Dorsolateral prefrontal cortex (tissue), 120 donors: ENCODE measurements at regions of chr16 and their contacts with region 1.

Region 1: GRCh38 chr16:55871411-55872038 is 3.6 kb downstream of the CES5A start:
- DNase-seq: no peak
- H3K4me3 ChIP-seq: no peak overlapping the region
- H3K27ac ChIP-seq: no peak overlapping the region
- H3K27me3 ChIP-seq: no peaks in the 10 kb centered on the region
- CTCF ChIP-seq: no peak

Region 2: DNA sequence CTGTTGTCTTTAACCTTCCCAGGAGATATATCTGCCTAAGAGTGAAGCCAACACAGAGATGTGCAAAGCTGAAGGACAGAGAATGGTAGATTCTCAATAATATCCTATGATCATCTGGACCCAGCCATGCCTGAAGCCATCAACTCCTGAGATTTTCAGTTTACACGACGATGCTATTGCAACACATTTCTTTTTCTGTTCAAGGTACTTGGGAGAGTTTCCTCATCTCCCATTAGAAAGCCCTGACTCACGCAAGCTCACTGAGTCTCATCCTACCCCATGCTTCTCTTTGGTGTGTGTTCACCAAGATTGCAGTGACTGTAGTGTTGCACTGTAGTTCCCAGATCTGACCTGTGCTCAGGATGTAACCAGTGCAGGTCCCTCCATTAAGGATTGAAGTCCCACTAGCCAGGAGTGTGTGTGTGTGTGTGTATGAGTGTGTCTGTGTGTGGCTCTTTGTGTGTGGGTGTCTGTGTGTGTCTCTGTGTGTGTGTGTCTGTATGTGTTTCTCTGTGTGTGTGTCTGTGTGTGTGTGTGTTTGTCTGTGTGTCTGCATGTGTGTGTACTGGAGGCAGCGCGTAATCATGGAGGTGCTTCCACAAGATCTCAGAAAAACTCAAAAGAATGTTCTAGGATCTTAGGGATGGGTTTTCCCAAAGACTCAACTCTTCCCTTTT is 54.2 kb before region 1 on chr16:
- intact Hi-C with region 1: no loop called
- DNase-seq: no peak
- H3K4me3 ChIP-seq: no peak overlapping the region
- H3K27ac ChIP-seq: no peak overlapping the region
- H3K27me3 ChIP-seq: peaks cover 0 to 67% (median 8%) of the 10 kb centered on the region in 45 donors
- CTCF ChIP-seq: no peak

Region 3: GRCh38 chr16:55832758-55833540 is 38.6 kb before region 1 on chr16 and contains the start of gene CES1:
- intact Hi-C with region 1: no loop called
- DNase-seq: no peak
- H3K4me3 ChIP-seq: peak within 1 kb of the TSS in 6 of 59 donors; percentile 9 to 33 (median 24)
- H3K27ac ChIP-seq: no peak within 1 kb of the TSS
- H3K27me3 ChIP-seq: peaks cover 0 to 4% (median 0%) of the 10 kb centered on the region in 45 donors
- CTCF ChIP-seq: no peak
- total RNA-seq, gene CES1: 0.22 to 14.7 (median 1.7) TPM in 111 of 120 experiments, not detected in the others

Region 4: DNA sequence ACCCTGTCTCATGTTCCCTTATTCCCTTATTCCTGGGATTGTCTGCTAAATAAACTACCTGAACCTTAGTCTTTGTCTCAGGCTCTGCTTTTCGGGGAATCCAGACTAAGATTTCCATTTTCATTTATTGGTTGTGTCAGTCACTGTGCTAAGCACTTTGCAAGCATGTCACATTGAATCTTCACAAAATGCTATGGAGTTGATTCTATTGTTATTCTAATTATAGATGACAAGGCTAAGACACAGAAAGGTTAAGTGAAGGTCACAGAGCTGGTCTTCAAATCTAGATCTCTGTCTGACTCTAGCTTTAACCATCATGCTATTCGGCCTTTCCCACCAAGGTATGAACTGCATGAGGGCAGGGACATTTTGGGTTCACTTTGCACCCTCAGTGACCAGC is 17.0 kb after region 1 on chr16:
- intact Hi-C with region 1: loop called in 1 of 2 experiments (anchors 1 kb)
- DNase-seq: no peak
- H3K4me3 ChIP-seq: no peak overlapping the region
- H3K27ac ChIP-seq: no peak overlapping the region
- H3K27me3 ChIP-seq: peaks cover 0 to 3% (median 0%) of the 10 kb centered on the region in 45 donors
- CTCF ChIP-seq: no peak